CD4-positive, alpha-beta memory T cell (primary cell): ENCODE measurements at regions of chrX and their contacts with region 1.

Region 1: GRCh38 chrX:65723706-65724105 is 56.3 kb downstream of the MSN start:
- DNase-seq: peak; percentile 30 to 75 (median 38)
- H3K4me3 ChIP-seq: peak overlapping the region in 1 of 2 donors; percentile 19
- H3K4me3 Mint-ChIP-seq: peak overlapping the region in 7 of 8 donors; percentile 19 to 83 (median 60)
- H3K27ac ChIP-seq: peak overlapping the region; percentile 64
- H3K27ac Mint-ChIP-seq: peak overlapping the region; percentile 87 to 95 (median 88)
- H3K4me1 ChIP-seq: peaks cover 91% of the 10 kb centered on the region
- H3K4me1 Mint-ChIP-seq: peaks cover 66 to 93% (median 82%) of the 10 kb centered on the region in 4 donors
- H3K27me3 ChIP-seq: no peaks in the 10 kb centered on the region
- H3K27me3 Mint-ChIP-seq: no peaks in the 10 kb centered on the region

Region 2: DNA sequence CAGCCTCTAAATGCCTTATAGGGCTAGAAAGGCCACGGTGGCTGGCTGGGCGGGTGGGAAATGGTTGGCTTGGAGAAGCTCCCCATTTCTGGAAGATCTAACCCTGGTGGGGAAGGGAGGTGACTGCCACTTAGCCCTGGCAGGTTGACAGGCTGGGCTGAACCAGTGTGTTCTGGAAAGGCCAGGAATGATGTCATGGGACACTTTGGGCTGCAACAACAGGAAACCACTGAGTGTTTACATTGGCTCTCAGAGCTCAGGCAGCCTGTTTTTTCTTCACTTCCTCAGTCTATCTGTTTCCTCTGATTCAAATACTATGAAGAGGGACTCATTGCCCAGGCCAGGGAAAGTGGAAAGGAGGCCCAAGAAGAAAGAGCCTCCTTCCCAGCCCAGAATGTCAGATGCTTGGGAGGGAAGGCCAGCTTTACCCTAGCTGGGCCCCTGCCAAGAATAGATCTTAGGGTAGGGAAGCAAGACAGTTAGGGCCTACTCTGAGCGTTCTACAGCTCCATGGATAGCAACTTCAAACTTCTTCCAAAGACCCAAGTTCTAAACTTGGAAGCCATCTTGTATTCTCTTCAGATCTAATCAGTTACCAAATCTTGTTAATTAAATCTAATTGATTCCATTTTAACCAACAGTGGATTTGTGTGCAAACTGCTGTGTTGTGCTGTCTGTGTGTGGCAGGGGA is 122.0 kb before region 1 on chrX:
- CTCF ChIA-PET with region 1: interaction called, 5 read pairs
- POLR2A ChIA-PET with region 1: interaction called, 10 read pairs
- intact Hi-C with region 1: no loop called
- DNase-seq: peak; percentile 47 to 75 (median 60)
- H3K4me3 ChIP-seq: no peak overlapping the region
- H3K4me3 Mint-ChIP-seq: peak overlapping the region; percentile 45 to 89 (median 70)
- H3K27ac ChIP-seq: peak overlapping the region; percentile 42
- H3K27ac Mint-ChIP-seq: peak overlapping the region; percentile 89 to 96 (median 93)
- H3K4me1 ChIP-seq: peaks cover 74% of the 10 kb centered on the region
- H3K4me1 Mint-ChIP-seq: peaks cover 46 to 89% (median 73%) of the 10 kb centered on the region in 4 donors
- H3K27me3 ChIP-seq: no peaks in the 10 kb centered on the region
- H3K27me3 Mint-ChIP-seq: no peaks in the 10 kb centered on the region

Region 3: GRCh38 chrX:65658229-65658628 is 65.5 kb before region 1 on chrX:
- CTCF ChIA-PET with region 1: no interaction called
- POLR2A ChIA-PET with region 1: no interaction called
- intact Hi-C with region 1: no loop called
- DNase-seq: no peak
- H3K4me3 ChIP-seq: no peak overlapping the region
- H3K4me3 Mint-ChIP-seq: no peak overlapping the region
- H3K27ac ChIP-seq: no peak overlapping the region
- H3K27ac Mint-ChIP-seq: peak overlapping the region in 6 of 7 donors; percentile 15 to 77 (median 38)
- H3K4me1 ChIP-seq: peaks cover 25% of the 10 kb centered on the region
- H3K4me1 Mint-ChIP-seq: peaks cover 23 to 50% (median 24%) of the 10 kb centered on the region in 4 donors
- H3K27me3 ChIP-seq: no peaks in the 10 kb centered on the region
- H3K27me3 Mint-ChIP-seq: no peaks in the 10 kb centered on the region

Region 4: DNA sequence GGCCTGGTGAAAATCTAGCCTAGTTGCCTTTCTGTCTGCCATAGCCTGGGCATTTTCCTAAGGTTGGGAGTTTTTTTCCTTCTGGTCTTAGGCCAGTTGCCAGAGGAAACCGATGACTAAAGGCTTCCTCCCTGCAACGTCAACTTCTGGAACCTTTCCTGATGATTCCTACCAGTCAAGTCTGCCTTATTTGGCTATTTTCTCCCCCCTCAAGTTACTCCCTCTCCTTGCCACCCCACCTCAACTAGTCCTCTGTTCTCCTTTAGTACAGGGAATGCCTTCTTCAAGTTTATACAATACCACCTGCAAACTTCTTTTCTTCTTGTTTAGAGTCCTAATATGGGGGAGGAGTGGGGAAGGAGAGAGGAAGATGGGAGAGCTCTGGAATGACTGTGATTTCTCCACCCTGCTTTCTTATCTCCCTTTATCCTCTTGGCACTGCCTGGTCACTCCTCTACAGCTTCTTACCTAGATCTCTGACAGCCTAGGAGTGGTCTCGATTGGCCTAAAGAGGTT is 45.7 kb before region 1 on chrX:
- CTCF ChIA-PET with region 1: interaction called, 6 read pairs
- POLR2A ChIA-PET with region 1: interaction called, 4 read pairs
- intact Hi-C with region 1: loop called (anchors 10 kb)
- DNase-seq: no peak
- H3K4me3 ChIP-seq: no peak overlapping the region
- H3K4me3 Mint-ChIP-seq: peak overlapping the region in 7 of 8 donors; percentile 57 to 83 (median 70)
- H3K27ac ChIP-seq: no peak overlapping the region
- H3K27ac Mint-ChIP-seq: peak overlapping the region; percentile 2 to 92 (median 68)
- H3K4me1 ChIP-seq: peaks cover 100% of the 10 kb centered on the region
- H3K4me1 Mint-ChIP-seq: peaks cover 65 to 97% (median 78%) of the 10 kb centered on the region in 4 donors
- H3K27me3 ChIP-seq: no peaks in the 10 kb centered on the region
- H3K27me3 Mint-ChIP-seq: no peaks in the 10 kb centered on the region

Region 5: GRCh38 chrX:65706041-65706828 is 17.5 kb before region 1 on chrX:
- CTCF ChIA-PET with region 1: interaction called, 8 read pairs
- POLR2A ChIA-PET with region 1: interaction called, 7 read pairs
- intact Hi-C with region 1: loop called (anchors 2 kb)
- DNase-seq: peak in 1 of 5 donors; percentile 75
- H3K4me3 ChIP-seq: peak overlapping the region in 1 of 2 donors; percentile 15
- H3K4me3 Mint-ChIP-seq: peak overlapping the region in 7 of 8 donors; percentile 32 to 82 (median 63)
- H3K27ac ChIP-seq: peak overlapping the region; percentile 61
- H3K27ac Mint-ChIP-seq: peak overlapping the region; percentile 85 to 97 (median 92)
- H3K4me1 ChIP-seq: peaks cover 71% of the 10 kb centered on the region
- H3K4me1 Mint-ChIP-seq: peaks cover 51 to 82% (median 68%) of the 10 kb centered on the region in 4 donors
- H3K27me3 ChIP-seq: no peaks in the 10 kb centered on the region
- H3K27me3 Mint-ChIP-seq: no peaks in the 10 kb centered on the region

Region 6: DNA sequence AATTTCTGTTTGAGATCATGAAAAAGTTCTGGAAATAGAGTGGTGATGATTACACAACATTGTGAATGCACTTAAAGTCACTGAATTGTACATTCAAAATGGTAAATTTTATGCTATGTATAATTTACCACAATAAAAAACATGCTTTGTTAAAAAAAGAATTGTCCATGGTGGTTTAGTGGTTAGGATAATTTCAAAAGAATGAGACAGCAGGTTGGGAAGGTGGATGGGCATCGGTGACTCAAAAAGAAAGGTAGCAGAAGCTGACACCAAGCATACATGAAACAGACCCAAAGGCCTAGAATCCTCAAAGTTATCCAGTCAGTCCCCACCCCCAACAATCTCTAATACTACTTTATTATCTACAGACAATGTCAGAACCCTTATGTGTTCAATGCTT is 34.8 kb after region 1 on chrX:
- CTCF ChIA-PET with region 1: no interaction called
- POLR2A ChIA-PET with region 1: no interaction called
- intact Hi-C with region 1: no loop called
- DNase-seq: no peak
- H3K4me3 ChIP-seq: no peak overlapping the region
- H3K4me3 Mint-ChIP-seq: no peak overlapping the region
- H3K27ac ChIP-seq: no peak overlapping the region
- H3K27ac Mint-ChIP-seq: no peak overlapping the region
- H3K4me1 ChIP-seq: peaks cover 9% of the 10 kb centered on the region
- H3K4me1 Mint-ChIP-seq: peaks cover 17 to 38% (median 32%) of the 10 kb centered on the region in 4 donors
- H3K27me3 ChIP-seq: no peaks in the 10 kb centered on the region
- H3K27me3 Mint-ChIP-seq: no peaks in the 10 kb centered on the region

Region 7: GRCh38 chrX:65783746-65784145 is 60.0 kb after region 1 on chrX:
- CTCF ChIA-PET with region 1: no interaction called
- POLR2A ChIA-PET with region 1: no interaction called
- intact Hi-C with region 1: no loop called
- DNase-seq: no peak
- H3K4me3 ChIP-seq: no peak overlapping the region
- H3K4me3 Mint-ChIP-seq: peak overlapping the region in 1 of 8 donors; percentile 49
- H3K27ac ChIP-seq: no peak overlapping the region
- H3K27ac Mint-ChIP-seq: peak overlapping the region in 1 of 7 donors; percentile 70
- H3K4me1 ChIP-seq: no peaks in the 10 kb centered on the region
- H3K4me1 Mint-ChIP-seq: peaks cover 4 to 9% (median 5%) of the 10 kb centered on the region in 4 donors
- H3K27me3 ChIP-seq: no peaks in the 10 kb centered on the region
- H3K27me3 Mint-ChIP-seq: no peaks in the 10 kb centered on the region